ENCODE measurements at regions of chr14 and their contacts with region 1.

Region 1: DNA sequence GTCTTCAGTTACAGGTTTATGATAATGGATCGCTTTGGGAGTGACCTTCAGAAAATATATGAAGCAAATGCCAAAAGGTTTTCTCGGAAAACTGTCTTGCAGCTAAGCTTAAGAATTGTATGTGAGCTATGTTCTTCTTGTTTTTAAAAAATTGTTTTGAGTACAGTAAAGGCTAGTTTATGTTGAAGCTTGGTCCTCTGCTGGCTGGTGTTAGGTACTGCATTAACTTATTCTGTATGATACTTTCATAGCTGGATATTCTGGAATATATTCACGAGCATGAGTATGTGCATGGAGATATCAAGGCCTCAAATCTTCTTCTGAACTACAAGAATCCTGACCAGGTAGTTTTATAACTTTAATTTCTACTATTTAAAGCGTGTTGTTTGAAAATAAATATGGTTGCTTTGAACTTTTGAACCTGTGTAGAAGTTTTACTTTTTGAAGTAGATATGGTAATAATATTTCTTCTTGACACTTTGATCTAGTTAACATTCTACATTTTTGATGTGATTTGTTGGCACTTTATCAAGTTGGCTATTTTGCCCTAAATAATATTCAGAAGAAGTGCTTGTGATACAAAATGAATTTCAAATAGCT is 55.7 kb downstream of the VRK1 start:
- DNase-seq: no peak
- H3K4me3 ChIP-seq: no peak overlapping the region
- H3K27ac ChIP-seq: no peak overlapping the region
- H3K4me1 ChIP-seq: no peaks in the 10 kb centered on the region
- H3K27me3 ChIP-seq: no peaks in the 10 kb centered on the region
- CTCF ChIP-seq: peak in 1 of 3 experiments; percentile 61; a peak in 2 of 4 replicates
- EP300 ChIP-seq: no peak
- POLR2A ChIP-seq: no peak
- RAD21 ChIP-seq: peak; percentile 25 to 28; a peak in 3 of 4 replicates

Region 2: DNA sequence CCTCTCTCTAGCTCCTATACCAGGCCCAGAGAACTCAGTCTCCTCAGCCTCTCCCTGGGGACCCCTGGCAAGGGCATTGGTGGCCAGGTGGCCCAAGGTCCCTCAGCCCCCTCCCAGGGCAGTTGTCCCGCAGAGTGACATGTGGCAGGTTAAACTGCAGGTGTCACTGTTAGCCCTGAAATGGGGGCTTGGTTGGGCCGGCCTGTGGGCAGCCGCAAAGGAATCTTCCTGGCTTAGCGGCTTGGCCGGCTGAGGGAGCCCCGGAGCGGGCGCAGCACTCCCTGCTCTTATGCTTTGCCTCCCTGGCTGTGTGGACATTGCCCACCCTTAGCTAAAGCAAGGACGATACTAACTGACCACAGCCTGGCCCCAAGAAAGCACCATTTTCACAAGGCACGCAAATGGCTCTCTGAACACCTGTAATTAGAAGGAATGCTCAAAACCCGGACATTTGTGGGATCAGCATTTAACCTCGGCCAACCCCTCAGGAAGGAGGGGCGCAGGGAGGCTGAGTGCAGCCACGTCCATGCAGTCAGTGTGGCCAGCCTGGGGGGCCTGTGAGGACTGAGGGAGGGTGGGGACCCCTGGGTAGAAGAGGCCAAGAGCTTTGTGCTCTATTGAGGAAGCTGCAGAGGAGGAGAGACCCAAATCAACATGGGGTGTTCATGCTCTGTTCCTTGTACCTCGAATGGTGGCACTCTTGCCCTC is 268.6 kb before region 1 on chr14:
- CTCF ChIA-PET with region 1: interaction called, 18 read pairs
- POLR2A ChIA-PET with region 1: no interaction called
- DNase-seq: peak; percentile 43 to 85
- H3K4me3 ChIP-seq: no peak overlapping the region
- H3K27ac ChIP-seq: no peak overlapping the region
- H3K4me1 ChIP-seq: peaks cover 0 to 6% (median 0%) of the 10 kb centered on the region in 4 experiments; a peak in 2 of 7 replicates
- H3K27me3 ChIP-seq: peaks cover 0 to 3% (median 0%) of the 10 kb centered on the region in 4 experiments; a peak in 1 of 7 replicates
- CTCF ChIP-seq: peak; percentile 79 to 98 (median 93)
- EP300 ChIP-seq: no peak
- POLR2A ChIP-seq: no peak
- RAD21 ChIP-seq: peak; percentile 100

Region 3: GRCh38 chr14:96802963-96803362 is 50.0 kb before region 1 on chr14:
- CTCF ChIA-PET with region 1: interaction called, 11 read pairs
- POLR2A ChIA-PET with region 1: no interaction called
- DNase-seq: no peak
- H3K4me3 ChIP-seq: no peak overlapping the region
- H3K27ac ChIP-seq: no peak overlapping the region
- H3K4me1 ChIP-seq: peaks cover 0 to 2% (median 0%) of the 10 kb centered on the region in 4 experiments; a peak in 1 of 7 replicates
- H3K27me3 ChIP-seq: no peaks in the 10 kb centered on the region
- CTCF ChIP-seq: no peak
- EP300 ChIP-seq: no peak
- POLR2A ChIP-seq: no peak
- RAD21 ChIP-seq: no peak

Region 4: GRCh38 chr14:96827290-96827689 is 25.6 kb before region 1 on chr14:
- CTCF ChIA-PET with region 1: interaction called, 13 read pairs
- POLR2A ChIA-PET with region 1: no interaction called
- DNase-seq: no peak
- H3K4me3 ChIP-seq: no peak overlapping the region
- H3K27ac ChIP-seq: no peak overlapping the region
- H3K4me1 ChIP-seq: no peaks in the 10 kb centered on the region
- H3K27me3 ChIP-seq: no peaks in the 10 kb centered on the region
- CTCF ChIP-seq: no peak
- EP300 ChIP-seq: no peak
- POLR2A ChIP-seq: no peak
- RAD21 ChIP-seq: no peak

Region 5: GRCh38 chr14:96832351-96832750 is 20.6 kb before region 1 on chr14:
- CTCF ChIA-PET with region 1: interaction called, 13 read pairs
- POLR2A ChIA-PET with region 1: no interaction called
- DNase-seq: no peak
- H3K4me3 ChIP-seq: no peak overlapping the region
- H3K27ac ChIP-seq: no peak overlapping the region
- H3K4me1 ChIP-seq: no peaks in the 10 kb centered on the region
- H3K27me3 ChIP-seq: no peaks in the 10 kb centered on the region
- CTCF ChIP-seq: no peak
- EP300 ChIP-seq: no peak
- POLR2A ChIP-seq: no peak
- RAD21 ChIP-seq: no peak

Region 6: DNA sequence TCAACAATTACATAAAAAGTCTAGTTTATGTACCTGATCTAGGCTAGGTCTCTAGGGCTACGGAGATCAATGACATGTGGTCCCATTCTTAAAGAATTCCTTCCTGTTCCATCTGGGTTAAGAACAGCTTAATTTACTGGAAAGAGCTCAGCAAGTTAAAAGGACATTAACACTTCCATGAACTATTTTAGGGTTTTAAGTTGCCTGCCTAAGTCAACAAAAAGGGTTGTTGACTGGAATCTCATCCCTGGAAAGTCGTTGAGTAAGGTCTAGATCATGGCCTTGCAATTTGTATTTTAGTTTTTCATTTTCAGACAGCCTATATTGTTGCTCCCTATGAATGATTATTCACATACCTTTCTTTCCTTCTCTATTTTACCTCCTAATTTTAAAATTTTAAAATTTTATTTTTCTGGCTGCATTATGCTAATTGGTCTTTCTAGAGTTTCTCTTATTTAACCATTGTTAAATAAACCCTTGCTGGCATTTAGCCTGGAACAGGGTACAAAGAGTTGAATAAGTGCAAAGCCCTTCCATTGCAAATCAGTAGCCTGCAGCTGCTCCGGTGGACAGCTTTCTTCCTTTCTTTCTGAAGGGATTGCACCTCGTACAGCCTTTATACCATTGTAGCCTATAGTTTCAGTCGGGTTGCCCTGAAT is 10.5 kb after region 1 on chr14:
- CTCF ChIA-PET with region 1: interaction called, 23 read pairs
- POLR2A ChIA-PET with region 1: no interaction called
- DNase-seq: no peak
- H3K4me3 ChIP-seq: no peak overlapping the region; a peak in 1 of 8 replicates
- H3K27ac ChIP-seq: no peak overlapping the region
- H3K4me1 ChIP-seq: peaks cover 0 to 6% (median 2%) of the 10 kb centered on the region in 4 experiments; a peak in 3 of 7 replicates
- H3K27me3 ChIP-seq: no peaks in the 10 kb centered on the region
- CTCF ChIP-seq: no peak
- EP300 ChIP-seq: no peak
- POLR2A ChIP-seq: no peak
- RAD21 ChIP-seq: no peak

Region 7: DNA sequence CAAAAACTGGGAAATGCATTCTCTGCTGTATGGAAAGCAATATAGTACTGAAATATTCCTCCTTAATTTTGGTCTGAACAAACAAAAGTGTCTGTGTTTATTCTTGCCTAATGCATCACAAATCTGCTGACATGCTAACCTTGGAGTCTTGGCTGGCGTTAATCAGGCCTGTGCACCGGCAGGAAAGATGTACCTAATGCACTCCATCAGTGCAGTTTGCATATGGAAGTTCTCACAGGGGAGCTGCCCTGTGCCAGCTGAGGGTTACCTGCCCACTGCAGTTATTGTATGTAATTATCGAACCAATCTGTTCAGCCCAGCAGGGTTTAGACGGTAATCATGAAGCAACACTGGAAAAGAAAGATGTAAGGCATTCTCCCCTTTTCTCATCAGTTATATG is 21.2 kb after region 1 on chr14:
- CTCF ChIA-PET with region 1: interaction called, 12 read pairs
- POLR2A ChIA-PET with region 1: no interaction called
- DNase-seq: no peak
- H3K4me3 ChIP-seq: no peak overlapping the region
- H3K27ac ChIP-seq: no peak overlapping the region
- H3K4me1 ChIP-seq: no peaks in the 10 kb centered on the region
- H3K27me3 ChIP-seq: no peaks in the 10 kb centered on the region
- CTCF ChIP-seq: no peak
- EP300 ChIP-seq: no peak
- POLR2A ChIP-seq: no peak
- RAD21 ChIP-seq: no peak